Cardiac septum (tissue), 1 donor: ENCODE measurements at regions of chr14 and their contacts with region 1.

Region 1: DNA sequence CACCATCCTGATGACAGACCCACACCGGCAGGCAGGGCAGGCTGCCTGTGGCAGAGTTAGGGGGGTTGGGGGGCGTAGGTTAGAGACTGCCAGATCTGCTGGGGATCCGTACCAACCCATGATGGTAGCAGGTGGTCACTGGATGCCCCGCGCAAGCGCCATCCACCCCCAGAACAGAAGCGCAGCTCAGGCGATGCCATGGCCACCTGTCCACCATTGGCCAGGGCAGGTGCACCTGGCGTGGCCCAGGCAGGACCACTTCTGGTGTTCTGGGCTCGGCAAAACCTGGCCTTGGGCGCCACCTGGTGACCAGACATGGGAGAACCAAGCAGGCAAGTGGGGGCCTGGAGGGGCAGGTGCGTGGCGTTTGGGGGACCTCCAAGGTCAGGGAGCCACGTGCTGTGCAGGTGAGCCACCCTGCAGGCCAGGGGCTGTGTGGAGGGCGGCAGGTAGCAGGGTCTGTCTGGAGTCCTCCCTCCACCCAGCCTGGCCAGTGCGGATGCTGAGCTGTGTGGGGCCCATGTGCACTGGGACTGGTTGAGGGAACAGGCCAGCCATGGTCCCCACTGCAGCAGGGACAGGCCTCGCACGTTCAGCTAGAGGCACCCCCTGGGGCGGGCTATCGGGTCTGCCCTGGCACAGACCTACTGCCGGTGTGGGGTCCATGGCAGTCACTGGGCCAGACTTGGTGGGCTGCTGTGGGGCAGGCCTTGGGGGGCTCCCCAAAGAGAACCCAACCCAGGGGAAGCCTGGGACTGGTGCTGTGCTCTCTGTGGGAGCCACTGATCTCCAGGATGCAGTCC is 15.6 kb downstream of the BAG5 start:
- DNase-seq: peak; percentile 90

Region 2: DNA sequence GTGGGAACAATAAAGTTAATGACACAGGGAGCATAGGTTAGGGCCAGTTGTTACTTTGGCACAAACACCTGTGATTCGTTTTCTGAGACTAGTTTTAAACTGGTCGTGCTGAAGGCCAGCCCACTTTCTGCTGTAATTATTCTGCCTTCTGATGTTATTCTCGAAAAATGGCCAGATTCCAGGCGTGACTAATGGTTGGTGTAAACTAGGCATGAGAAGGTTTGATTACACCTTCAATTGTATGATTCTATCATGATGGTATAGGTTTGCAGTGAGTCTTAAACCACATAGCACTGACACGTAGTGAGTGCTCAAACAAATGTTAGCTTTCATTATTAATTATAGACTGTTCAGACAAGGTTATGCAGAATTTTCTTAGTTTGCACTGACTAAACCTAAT is 63.3 kb before region 1 on chr14:
- intact Hi-C with region 1: no loop called
- DNase-seq: no peak

Region 3: DNA sequence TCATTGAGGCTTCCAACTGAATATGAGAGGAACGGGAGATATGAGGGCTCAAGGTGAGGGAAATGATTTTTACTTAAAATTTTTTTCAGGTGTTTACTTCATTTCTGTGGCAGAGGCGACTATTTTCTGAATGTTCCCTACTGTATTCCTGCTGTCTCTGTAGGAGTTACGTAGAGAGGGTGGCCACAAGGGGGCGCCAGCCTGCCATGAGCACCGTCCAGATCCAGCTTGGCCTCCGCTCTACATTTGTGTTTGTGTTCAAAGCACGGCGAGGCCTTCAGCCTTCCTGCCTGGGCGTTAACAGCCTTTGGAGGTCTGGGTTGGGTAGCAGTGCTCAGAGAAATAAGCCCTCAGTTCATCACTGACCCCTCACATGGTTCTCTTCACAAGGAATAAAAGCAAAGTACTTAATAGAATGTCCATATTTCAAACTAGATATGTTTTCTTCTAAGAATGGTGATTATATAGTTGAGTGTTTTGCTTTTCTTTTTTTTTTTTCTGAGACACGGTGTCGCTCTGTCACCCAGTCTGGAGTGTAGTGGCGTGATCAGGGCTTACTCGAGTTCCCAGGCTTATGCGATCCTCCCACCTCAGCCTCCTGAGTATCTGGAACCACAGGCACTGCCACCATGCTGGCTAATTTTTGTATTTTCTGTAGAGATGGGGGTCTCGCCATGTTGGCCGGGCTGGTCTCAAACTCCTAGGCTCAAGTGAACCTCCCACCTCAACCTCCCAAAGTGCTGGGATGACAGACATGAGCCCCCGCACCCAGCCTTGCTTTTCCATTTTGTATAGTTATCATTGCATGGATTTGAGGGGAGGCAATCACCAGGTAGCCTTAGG is 46.5 kb before region 1 on chr14:
- intact Hi-C with region 1: loop called (anchors 1 kb)
- DNase-seq: peak; percentile 89

Region 4: DNA sequence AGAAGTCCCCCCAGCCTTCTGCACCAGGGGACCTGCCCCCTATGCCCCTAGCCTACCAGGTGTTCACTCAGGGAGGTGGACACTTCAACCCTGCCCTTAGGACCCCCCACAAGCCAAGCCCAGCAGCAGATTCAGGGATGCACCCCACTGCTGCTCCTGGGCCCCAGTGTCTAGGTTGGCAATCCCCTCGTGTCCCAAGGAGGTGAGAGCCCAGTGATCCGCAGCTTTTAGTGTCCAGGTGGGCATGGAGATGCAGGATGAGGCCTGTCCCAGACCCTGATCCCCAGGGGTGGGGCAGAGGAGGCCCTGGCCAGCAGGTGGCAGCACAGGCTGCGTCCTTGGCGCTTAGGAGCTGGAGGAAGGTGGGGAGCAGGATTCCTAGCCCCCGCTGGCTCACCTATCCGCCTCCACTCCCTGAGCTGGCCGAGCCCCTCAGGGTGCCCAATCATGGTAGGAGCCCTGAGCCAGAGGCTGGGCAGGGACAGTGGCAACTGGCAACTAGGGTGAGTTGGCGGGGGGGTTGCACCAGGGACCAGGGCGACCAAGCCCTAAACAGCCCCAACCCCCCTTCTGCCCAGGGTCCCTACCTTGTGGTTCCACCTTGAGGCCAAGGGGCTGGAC is 28.3 kb before region 1 on chr14:
- intact Hi-C with region 1: loop called (anchors 2 kb)
- DNase-seq: peak; percentile 85